ENCODE measurements at regions of chr7 and their contacts with region 1.

Region 1: DNA sequence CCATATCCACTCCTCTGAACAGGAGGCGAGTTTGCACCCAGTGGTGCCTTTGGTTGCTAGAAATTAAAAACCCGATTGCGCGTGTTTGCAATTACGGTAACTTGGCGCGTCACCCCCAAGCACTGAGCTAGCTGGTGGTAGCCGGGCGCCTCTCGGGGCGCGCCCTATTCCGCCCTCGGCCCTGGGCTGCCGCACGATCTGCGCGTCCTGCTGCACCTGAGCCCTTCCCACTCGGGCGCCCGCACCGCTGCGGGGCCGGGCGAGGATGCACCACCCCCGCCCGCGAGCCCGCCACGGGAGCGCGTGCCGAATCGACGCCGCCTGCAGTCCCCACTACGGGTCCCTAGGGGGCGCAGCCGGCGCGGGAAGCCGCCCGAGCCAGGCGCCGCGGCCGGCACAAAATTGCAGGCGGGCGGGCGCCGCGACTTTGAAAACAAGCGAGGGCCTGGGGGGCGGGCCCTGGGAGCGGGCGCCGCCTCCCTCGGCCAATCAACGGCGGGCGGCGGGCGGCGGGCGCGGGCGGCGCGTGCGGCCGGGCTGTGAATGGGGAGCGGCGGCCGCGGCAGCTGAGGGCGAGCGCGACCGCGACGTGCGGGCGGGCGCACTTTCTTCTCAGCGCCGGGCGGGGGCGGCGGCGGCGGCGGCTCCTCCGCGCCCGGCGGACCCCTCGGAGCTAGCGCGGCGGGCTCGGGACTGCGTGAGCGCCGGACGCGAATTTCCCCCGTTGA is at the start of gene SDK1:
- DNase-seq: peak; percentile 68 to 92 (median 82)
- H3K4me3 ChIP-seq: peak within 1 kb of the TSS; percentile 42 to 78 (median 63)
- H3K27ac ChIP-seq: peak within 1 kb of the TSS in 13 of 59 donors; percentile 5 to 82 (median 45)
- H3K27me3 ChIP-seq: no peaks in the 10 kb centered on the region
- CTCF ChIP-seq: peak; percentile 55 to 99 (median 89)
- total RNA-seq, gene SDK1: 2.4 to 16.4 (median 8.6) TPM

Region 2: DNA sequence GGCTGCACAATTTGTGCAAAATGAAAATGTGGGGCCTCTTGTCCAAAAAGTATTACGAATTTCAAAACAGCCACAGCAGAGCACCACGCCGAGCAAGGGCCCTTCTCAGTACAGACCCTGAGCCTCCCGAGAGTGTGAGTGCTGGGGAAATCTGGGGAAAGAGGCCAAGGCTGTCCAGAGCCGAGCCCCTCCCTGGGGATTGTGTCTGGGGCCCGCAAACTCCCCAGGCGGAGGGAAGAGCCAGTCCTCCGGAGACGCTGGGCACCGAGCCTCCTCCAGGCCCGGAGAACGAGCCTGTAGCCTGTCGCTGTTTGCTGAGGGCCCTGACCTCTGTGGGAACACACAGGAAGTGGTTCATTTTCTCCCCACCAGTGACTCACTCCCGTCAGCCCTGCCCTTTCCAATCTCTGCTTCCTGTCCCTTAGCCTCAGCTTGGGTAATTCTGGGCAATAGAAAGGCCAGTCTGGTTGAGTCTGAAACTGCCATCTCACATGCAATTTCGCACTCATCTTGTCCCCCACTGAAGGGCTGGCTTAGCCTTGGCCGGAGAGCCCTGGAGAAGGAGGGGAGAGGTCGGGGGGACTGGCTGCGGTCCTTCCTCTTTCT is 437.3 kb before region 1 on chr7:
- intact Hi-C with region 1: loop called in 1 of 2 experiments (anchors 10 kb)
- DNase-seq: peak in 1 of 10 donors; percentile 34
- H3K4me3 ChIP-seq: peak overlapping the region in 3 of 59 donors; percentile 1 to 15 (median 15)
- H3K27ac ChIP-seq: peak overlapping the region in 54 of 59 donors; percentile 6 to 87 (median 62)
- H3K27me3 ChIP-seq: no peaks in the 10 kb centered on the region
- CTCF ChIP-seq: no peak

Region 3: DNA sequence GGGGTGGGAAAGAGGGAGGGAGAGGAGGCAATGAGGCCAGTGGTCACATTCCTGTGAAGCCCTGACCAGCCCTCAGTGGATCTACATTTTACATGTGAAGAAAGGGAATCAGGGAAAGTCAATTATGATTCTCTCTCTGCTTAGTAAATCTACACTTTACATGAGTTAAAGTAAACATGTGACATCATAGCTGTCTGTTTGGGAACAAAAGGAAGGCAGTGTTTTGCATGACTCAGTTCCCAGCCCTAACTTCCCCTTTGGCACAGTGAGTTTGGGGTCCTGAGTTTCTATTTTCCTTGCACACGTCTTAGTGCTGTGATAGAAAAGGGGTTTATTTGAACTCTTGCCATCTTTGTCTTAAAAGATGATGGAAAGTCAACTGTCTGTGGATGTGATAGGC is 615.3 kb after region 1 on chr7:
- intact Hi-C with region 1: loop called in 1 of 2 experiments (anchors 10 kb)
- DNase-seq: no peak
- H3K4me3 ChIP-seq: no peak overlapping the region
- H3K27ac ChIP-seq: no peak overlapping the region
- H3K27me3 ChIP-seq: no peaks in the 10 kb centered on the region
- CTCF ChIP-seq: no peak

Measured in dorsolateral prefrontal cortex (tissue), 120 donors.